ENCODE measurements at regions of chr1 and their contacts with region 1.

Region 1: DNA sequence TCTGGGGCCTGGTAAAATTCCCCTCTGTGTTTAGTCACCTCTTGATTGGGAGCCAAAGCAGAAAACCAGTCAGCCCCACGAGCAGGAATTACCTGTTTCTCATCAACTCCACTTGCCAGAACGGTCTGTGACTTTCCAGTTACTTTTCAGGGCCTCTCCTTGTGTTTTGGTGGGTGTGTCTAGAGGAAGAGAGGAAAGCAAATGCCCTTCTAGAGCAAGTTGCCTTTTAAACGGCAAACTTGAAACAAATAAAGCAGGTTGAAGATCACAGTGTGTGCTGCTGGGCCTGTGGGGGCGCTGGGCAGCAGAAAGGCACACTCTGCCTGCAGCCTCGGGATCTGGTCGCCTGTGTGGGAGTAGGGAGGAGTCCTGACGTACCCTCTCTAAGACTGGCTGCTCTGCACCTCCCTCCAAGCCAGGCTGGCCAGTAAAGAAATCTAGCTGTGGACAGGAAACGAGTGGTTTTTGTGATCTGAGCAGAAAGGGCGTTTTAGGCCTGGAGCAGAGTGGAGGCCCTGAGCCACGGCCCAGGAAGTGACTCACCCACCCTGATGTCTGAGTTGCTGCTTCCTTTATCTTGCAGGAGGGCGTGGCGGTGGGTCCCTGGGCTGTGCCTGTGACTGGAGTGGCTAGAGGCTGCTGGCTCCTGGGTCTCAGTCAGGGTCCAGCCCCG is 11.1 kb upstream of the S100A11 start:
- DNase-seq: peak; percentile 96
- ATAC-seq: peak; percentile 95
- H3K4me3 Mint-ChIP-seq: peak overlapping the region; percentile 75
- H3K27ac Mint-ChIP-seq: peak overlapping the region; percentile 97
- H3K4me1 Mint-ChIP-seq: peaks cover 29% of the 10 kb centered on the region
- H3K27me3 Mint-ChIP-seq: peaks cover 3% of the 10 kb centered on the region

Region 2: GRCh38 chr1:152034646-152035405 is 13.0 kb before region 1 on chr1:
- CTCF ChIA-PET with region 1: interaction called, 72 read pairs
- DNase-seq: peak; percentile 83
- ATAC-seq: peak; percentile 72
- H3K4me3 Mint-ChIP-seq: peak overlapping the region; percentile 96
- H3K27ac Mint-ChIP-seq: peak overlapping the region; percentile 94
- H3K4me1 Mint-ChIP-seq: peaks cover 40% of the 10 kb centered on the region
- H3K27me3 Mint-ChIP-seq: no peaks in the 10 kb centered on the region

Region 3: GRCh38 chr1:152175544-152175943 is 127.7 kb after region 1 on chr1:
- CTCF ChIA-PET with region 1: interaction called, 201 read pairs
- DNase-seq: no peak
- ATAC-seq: no peak
- H3K4me3 Mint-ChIP-seq: no peak overlapping the region
- H3K27ac Mint-ChIP-seq: no peak overlapping the region
- H3K4me1 Mint-ChIP-seq: no peaks in the 10 kb centered on the region
- H3K27me3 Mint-ChIP-seq: peaks cover 30% of the 10 kb centered on the region